BJ (cell line): ENCODE measurements at regions of chr1 and their contacts with region 1.

Region 1: GRCh38 chr1:79353224-79353623 is 346.7 kb upstream of the ADGRL4 start:
- DNase-seq: no peak
- H3K4me3 ChIP-seq: no peak overlapping the region
- H3K27me3 ChIP-seq: no peaks in the 10 kb centered on the region
- CTCF ChIP-seq: peak; percentile 60

Region 2: DNA sequence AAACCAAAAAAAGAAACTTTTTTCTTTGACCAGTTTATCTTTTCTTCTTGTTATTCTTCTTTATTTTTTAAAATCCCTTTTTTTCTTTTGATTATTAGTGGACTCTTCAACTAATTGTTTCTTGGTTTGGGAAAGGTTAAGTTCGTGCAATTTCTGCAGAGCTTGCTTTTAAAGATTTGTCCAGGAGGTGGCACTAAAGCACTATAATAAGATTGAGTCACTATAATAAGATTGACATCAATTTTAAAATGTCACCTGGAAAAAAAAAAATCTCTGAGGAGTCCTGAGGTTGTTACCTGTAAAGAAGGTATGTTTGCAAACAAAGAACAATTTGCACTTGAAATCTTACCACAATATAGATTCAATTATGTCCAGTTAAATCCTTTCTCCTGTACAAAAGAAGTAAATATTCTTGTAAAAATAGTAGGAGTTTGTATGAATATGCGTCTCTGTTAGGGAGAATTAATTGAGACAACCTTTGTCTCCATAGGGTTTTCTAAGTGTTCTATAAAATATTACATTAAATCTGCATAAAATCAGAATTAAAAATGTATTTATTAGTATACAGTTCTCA is 513.4 kb before region 1 on chr1:
- CTCF ChIA-PET with region 1: interaction called, 19 read pairs
- POLR2A ChIA-PET with region 1: no interaction called
- DNase-seq: no peak
- H3K4me3 ChIP-seq: no peak overlapping the region
- H3K27me3 ChIP-seq: no peaks in the 10 kb centered on the region
- CTCF ChIP-seq: peak; percentile 58

Region 3: DNA sequence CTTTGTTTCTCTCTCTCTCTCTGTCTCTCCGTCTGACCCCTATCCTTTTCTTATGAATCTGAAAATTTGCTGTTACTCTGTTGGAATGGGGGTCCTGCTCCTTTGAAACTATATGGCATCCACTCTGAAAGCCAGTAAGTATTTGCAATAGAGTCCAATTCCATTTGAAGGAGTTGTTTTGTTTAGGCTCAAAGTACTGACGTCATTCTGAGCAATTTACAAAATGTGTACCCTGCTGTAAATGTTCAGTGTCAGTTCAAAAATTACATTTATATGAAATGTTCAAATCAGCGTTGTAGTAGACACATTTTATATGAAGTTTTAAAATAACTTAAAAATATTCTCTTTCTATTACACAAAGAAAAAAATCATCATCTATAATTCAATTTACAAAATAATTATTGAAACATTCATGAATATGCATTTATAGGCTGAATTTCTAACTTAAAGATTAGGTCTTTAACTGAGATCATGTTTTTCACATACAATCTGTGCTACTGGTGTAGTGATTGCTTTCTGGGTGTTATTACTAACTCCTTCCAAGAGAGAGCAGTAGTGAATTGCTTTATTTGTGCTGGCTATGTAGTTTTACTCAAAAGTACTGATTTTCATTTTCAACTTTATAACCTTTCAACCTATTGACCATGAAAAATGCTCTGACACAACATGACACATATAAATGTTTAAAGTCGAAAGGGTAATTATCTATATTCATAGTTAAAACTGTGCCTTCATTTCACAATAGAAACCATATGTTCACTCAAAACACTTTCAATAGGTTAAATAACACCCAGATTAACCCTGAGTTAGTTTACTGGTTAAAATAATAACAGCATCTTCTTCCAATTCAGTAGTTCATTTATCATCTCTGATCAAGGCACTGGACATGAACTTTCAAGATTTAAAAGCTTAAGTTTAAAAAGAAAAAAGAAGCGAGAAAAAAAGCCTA is 93.6 kb before region 1 on chr1:
- CTCF ChIA-PET with region 1: interaction called, 27 read pairs
- POLR2A ChIA-PET with region 1: no interaction called
- DNase-seq: peak; percentile 18
- H3K4me3 ChIP-seq: no peak overlapping the region
- H3K27me3 ChIP-seq: no peaks in the 10 kb centered on the region
- CTCF ChIP-seq: peak; percentile 67

Region 4: DNA sequence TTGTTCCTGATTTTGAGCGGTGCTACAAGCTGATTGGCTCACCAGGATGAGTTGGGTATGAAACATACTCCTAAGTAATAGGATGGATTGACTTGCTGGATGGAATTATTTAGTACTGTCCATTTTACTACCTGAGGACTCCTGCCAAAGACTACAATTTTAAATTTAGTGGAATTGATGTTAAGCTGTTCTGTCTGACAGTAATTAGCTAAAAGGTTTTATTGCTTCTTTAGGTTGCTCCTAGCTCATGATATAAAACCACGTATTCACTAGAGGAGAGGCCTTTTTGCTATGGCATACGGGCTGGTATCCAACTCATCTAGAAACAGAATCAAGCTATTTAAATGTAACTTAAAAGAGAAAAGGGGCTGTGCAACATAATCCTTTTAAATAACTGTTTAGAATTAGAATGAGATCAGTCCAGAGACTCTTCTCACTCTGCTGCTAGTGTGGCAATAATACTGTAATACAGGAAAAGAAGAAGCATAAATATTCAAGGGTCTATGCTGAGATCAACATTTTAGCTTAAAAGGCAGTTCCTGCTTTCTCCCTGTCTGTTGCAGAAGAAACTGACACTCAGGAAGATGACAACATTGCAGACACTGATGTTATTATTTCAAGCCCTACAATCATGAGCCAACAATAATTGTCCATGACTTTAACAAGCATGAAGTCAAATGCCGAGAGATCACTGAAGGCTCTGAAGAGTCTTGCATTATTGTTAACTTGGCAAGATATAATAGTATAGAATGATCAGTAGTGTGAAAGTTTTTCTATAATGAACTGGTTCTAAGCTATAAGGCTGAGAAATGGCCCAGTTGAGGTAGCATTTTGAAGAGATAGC is 88.0 kb before region 1 on chr1:
- CTCF ChIA-PET with region 1: interaction called, 27 read pairs
- POLR2A ChIA-PET with region 1: no interaction called
- DNase-seq: no peak
- H3K4me3 ChIP-seq: no peak overlapping the region
- H3K27me3 ChIP-seq: no peaks in the 10 kb centered on the region
- CTCF ChIP-seq: no peak

Region 5: DNA sequence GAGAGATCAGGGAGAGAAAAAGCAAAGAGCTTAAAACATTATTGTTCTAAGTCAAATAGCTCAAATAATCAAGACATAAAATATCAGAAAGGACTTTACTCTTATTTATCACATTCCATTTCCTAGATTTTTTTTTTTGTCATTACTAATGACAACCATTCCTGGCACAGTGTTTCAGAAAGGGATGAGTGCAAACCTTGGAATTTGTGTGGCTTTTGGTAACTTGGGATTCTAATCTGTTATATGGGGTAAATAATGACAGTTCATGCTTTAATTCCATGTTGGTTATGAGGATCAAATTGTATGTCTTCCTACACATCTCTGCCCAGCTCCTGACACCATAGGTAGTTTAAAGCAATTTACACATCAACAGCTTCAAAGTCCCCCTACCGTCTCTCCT is 11.7 kb after region 1 on chr1:
- CTCF ChIA-PET with region 1: interaction called, 17 read pairs
- POLR2A ChIA-PET with region 1: no interaction called
- DNase-seq: no peak
- H3K4me3 ChIP-seq: no peak overlapping the region
- H3K27me3 ChIP-seq: no peaks in the 10 kb centered on the region
- CTCF ChIP-seq: no peak